ENCODE measurements at regions of chr2 and their contacts with region 1.

Region 1: GRCh38 chr2:221969087-221969829 is 329.5 kb downstream of the PAX3 start:
- DNase-seq: peak; percentile 77
- H3K4me3 ChIP-seq: no peak overlapping the region
- H3K27ac ChIP-seq: no peak overlapping the region
- H3K4me1 ChIP-seq: no peaks in the 10 kb centered on the region
- H3K27me3 ChIP-seq: peaks cover 14% of the 10 kb centered on the region

Region 2: DNA sequence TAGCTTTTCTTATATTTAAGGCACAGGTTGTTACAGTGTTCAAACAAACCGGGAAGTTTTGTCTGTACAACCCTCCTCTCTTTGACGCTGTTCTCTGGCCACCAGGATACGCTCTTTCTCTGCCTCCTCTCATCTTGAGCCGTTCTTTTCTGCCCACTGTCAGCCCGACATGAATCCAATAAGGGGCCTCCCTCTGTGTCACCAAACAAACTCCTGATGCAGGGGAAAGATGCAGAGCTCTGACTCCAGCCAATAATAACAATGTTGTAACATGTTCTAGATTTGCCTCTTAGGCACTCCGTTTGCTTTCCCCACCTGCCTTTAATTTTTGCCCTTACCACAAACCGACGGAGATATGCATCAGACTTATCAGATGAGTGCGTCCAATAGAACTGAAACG is 1892.5 kb before region 1 on chr2:
- in situ Hi-C with region 1: loop called (anchors 25 kb)
- DNase-seq: peak; percentile 87
- H3K4me3 ChIP-seq: peak overlapping the region; percentile 54
- H3K27ac ChIP-seq: peak overlapping the region; percentile 85
- H3K4me1 ChIP-seq: peaks cover 25% of the 10 kb centered on the region
- H3K27me3 ChIP-seq: no peaks in the 10 kb centered on the region

Region 3: GRCh38 chr2:220687231-220687843 is 1281.9 kb before region 1 on chr2:
- in situ Hi-C with region 1: loop called (anchors 25 kb)
- DNase-seq: peak; percentile 86
- H3K4me3 ChIP-seq: no peak overlapping the region
- H3K27ac ChIP-seq: no peak overlapping the region
- H3K4me1 ChIP-seq: 0 out of 2 replicates have a peak, but pooled peaks cover 4% of the 10 kb centered on the region
- H3K27me3 ChIP-seq: no peaks in the 10 kb centered on the region

Region 4: DNA sequence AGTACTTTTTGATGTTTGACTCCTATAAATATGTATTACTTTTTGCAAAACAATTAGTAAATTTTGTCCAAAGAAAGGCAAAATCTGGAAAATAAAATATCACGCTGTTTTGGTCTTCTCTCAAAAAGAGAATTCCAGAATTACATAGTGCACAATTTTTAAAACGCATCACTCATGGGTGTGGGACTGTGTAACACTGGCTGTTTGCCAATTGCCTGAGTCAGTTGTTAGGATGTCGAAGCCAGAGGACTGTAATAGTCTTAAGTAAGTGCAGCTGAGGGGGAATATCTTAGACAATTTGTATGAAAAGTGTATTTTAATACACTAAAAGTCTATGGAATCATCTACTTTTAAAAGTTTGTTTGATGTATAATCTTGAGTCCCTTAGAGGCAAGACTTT is 373.1 kb before region 1 on chr2:
- in situ Hi-C with region 1: loop called (anchors 25 kb)
- DNase-seq: peak; percentile 92
- H3K4me3 ChIP-seq: no peak overlapping the region
- H3K27ac ChIP-seq: no peak overlapping the region
- H3K4me1 ChIP-seq: 0 out of 2 replicates have a peak, but pooled peaks cover 7% of the 10 kb centered on the region
- H3K27me3 ChIP-seq: no peaks in the 10 kb centered on the region

Region 5: DNA sequence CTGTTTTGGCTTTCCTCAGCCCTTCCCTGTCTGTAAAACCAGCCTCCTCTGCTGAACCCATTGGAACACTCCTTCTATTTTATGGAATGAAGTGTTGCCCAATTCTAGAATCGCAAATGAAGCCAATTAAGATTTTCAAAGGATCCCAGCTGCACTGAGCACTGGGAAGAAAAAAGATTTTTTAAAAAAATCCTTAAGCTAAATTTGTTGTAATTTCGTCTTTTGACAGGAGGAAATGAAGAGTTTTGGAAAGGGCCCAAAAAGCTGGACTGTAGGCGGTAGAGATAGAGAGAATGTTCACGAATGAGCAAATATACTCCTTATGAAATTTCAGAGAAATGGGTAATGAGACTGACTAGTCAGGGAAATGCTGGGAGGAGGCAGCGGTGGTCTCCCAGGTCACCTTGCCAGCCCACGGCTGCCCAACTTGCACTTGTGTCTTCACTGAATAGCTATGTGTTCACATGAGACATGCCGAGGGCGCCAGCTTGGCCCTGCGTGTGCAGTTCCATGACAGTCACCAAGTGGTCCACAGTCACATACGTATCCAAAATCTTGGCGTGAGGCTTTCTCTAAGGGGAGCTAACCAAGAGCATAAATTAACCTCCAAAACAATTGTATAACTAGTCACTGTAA is 525.0 kb after region 1 on chr2:
- in situ Hi-C with region 1: no loop called
- DNase-seq: no peak
- H3K4me3 ChIP-seq: no peak overlapping the region
- H3K27ac ChIP-seq: no peak overlapping the region
- H3K4me1 ChIP-seq: no peaks in the 10 kb centered on the region
- H3K27me3 ChIP-seq: no peaks in the 10 kb centered on the region

Measured in GM23248 (cell line).